Activated CD8-positive, alpha-beta T cell treated with anti-CD3 and anti-CD28 coated beads for 36 hours (primary cell): ENCODE measurements at regions of chr11 and their contacts with region 1.

Region 1: DNA sequence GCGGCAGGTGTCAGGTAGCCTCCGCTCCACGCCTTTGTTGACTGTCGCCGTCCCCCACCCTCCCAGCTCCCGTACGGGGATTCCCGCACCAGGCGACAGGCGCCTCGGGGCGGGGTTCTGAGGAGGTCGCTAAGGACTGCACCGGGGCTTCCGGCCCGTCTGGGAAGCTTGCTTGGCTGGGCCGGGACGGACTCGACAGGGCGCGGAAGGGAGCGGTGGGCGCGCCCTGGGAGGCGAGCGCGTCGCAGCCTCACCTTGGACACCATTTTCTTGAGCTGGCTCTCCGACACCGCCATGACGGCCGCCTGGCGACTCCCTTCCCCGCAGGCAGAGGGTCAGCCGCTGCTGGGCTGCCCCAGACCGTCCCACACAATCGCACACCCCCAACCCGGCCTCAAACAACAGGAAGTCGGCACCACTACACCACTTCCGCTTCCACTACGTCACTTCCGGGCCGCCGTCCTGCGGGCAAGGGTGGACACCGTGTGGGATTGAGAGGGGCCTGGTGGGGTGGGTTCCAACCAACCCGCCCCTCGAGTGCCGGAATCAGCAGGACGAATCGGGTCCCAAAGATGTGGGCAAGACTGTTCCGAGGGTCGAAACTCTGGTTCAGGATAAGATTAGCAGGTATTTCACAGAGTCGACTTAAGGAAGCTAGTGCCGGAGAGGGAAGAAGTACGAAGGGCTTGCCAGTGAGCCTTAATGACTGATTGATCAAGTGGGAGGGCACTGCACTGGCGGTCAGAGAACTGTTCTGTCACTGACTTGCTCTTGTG is at the start of gene TSG101:
- DNase-seq: peak; percentile 95
- ATAC-seq: peak; percentile 89
- H3K4me3 Mint-ChIP-seq: peak within 1 kb of the TSS; percentile 90
- H3K27ac Mint-ChIP-seq: peak within 1 kb of the TSS; percentile 99
- H3K4me1 Mint-ChIP-seq: peaks cover 50% of the 10 kb centered on the region
- H3K27me3 Mint-ChIP-seq: no peaks in the 10 kb centered on the region
- CTCF ChIP-seq: no peak
- total RNA-seq, gene TSG101: 34.0 to 37.4 TPM

Region 2: DNA sequence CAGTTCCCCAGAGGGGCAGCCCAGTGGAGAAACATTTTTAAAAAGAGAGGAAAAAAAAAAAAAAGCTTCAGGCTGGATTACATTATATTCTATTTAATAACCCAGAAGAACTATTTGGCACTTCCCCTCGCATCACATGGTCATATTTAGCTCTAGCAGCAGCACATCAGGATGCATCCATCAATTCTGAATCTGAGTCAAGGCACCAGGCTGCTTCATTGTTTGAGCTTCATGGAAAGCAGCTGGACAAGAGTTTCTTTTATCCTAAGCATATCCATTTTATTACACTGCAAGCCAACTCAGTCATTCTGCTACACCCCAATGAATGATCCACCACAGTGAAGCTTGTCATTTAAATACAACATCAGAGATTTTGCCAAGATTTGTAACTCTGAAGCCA is 97.5 kb after region 1 on chr11:
- CTCF ChIA-PET with region 1: no interaction called
- POLR2A ChIA-PET with region 1: no interaction called
- intact Hi-C with region 1: no loop called
- DNase-seq: no peak
- ATAC-seq: no peak
- H3K4me3 Mint-ChIP-seq: no peak overlapping the region
- H3K27ac Mint-ChIP-seq: no peak overlapping the region
- H3K4me1 Mint-ChIP-seq: peaks cover 33% of the 10 kb centered on the region
- H3K27me3 Mint-ChIP-seq: no peaks in the 10 kb centered on the region
- CTCF ChIP-seq: no peak

Region 3: GRCh38 chr11:18634140-18635032 is 107.7 kb after region 1 on chr11 and contains the start of gene SPTY2D1:
- CTCF ChIA-PET with region 1: interaction called, 5 read pairs
- POLR2A ChIA-PET with region 1: interaction called, 19 read pairs
- intact Hi-C with region 1: no loop called
- DNase-seq: peak; percentile 100
- ATAC-seq: peak; percentile 98
- H3K4me3 Mint-ChIP-seq: peak within 1 kb of the TSS; percentile 89
- H3K27ac Mint-ChIP-seq: peak within 1 kb of the TSS; percentile 97
- H3K4me1 Mint-ChIP-seq: peaks cover 21% of the 10 kb centered on the region
- H3K27me3 Mint-ChIP-seq: no peaks in the 10 kb centered on the region
- CTCF ChIP-seq: no peak
- total RNA-seq, gene SPTY2D1: 21.3 TPM